Tibial artery (tissue), 4 donors: ENCODE measurements at regions of chr12 and their contacts with region 1.

Region 1: DNA sequence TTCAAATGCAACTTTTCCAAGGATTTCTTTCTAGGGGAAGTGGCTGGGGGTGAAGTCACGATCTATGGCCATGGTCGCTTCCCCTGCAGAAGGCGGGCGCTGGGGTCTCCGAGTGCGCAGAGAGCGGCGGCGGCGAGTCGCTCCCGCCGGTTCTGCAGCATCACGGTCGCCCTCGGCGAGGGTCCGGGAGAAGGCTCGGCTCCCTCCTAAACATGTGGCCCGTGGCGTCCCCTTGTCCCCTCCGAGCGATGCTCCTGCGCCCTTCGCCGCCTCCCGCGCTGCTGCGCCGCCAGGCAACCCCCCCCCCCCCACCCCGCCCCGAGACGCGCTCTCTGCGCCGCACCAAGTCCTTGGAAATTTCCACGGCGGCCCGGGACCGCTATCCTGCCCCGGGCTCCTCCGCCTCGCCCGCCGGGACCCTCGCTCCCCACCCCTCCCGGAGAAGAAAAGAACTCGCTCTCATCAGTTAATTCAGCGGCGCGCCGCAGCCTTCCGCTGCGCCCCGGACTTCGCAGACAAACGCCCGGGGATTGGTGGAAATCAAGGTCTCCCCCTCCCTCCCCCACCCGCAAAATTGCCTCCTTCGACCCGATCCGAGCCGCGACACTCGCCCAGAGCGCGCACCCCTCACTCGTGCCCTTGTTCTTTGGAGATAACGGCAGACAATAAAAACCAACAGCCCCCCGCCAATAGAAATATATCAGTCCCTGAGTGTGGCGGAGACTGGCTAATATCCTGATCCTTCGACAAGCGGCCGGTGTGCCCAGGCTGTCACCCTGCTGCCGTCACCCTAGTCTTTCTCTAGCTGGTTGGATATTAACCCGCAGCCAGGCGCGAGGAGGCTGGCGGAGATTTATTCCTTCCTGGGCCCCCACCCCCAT is at the start of gene ST8SIA1:
- DNase-seq: peak; percentile 28 to 71
- H3K4me3 ChIP-seq: peak within 1 kb of the TSS; percentile 60 to 65
- H3K27ac ChIP-seq: peak within 1 kb of the TSS; percentile 17 to 61
- H3K4me1 ChIP-seq: peaks cover 0 to 17% (median 5%) of the 10 kb centered on the region in 4 donors
- H3K27me3 ChIP-seq: no peaks in the 10 kb centered on the region
- CTCF ChIP-seq: no peak

Region 2: DNA sequence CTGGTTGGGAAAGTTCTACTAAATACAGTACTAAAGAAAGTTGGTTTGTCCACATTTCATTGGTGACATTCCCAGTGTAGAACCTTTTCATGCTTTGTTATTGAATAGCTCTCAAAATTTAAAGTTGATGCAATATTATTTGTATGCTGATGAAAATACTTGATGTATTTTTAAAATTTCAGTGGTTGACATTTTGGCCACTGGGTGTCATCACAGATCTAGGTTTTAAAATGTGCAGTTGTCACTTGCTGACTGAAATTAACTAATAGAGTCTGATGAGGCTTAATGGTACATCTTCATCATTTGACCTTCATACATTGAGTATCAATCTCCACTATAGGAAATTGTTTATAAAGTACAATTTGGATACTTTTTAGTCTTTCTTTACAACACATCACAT is 251.5 kb before region 1 on chr12:
- intact Hi-C with region 1: loop called (anchors 1 kb)
- DNase-seq: no peak
- H3K4me3 ChIP-seq: no peak overlapping the region
- H3K27ac ChIP-seq: no peak overlapping the region
- H3K4me1 ChIP-seq: no peaks in the 10 kb centered on the region
- H3K27me3 ChIP-seq: no peaks in the 10 kb centered on the region
- CTCF ChIP-seq: peak; percentile 47 to 61

Region 3: DNA sequence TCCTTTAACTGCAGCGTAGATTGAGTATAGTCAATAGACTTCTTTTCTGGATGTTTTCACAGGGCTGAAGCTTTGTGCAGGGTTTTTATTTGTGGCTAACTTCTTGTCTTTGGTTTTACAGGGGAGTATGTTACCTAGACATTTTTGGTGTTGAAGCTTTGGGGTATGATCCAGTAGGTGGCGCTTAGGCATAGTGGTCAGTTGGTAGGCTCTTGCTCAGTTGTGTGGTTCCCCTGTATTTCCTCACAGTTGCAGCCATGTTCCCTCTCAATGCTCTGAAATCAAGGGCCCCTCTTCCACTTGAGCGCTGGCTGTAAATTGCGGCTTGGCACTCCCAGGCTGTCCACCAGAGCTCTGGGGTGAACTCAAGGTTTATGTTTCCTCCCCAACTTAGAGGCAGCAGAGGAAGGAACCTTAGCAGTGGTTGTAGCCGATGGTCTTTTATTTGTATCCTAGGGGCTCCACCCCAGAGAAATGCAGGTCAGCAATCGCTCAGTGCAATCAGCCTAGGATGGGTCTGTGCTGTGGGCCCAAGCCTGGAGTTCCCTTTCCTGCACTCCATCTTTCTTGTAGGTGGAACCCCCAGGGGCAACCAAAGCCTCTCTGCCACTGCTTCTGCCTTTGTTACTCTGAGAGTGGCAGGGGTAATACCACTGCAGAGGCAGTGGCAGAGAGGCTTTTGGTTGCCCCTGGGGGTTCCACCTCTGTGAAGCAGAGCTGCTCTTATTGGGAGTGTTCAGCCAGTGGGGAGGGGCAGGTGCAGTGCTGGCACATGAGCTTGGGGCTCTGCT is 233.5 kb before region 1 on chr12:
- intact Hi-C with region 1: loop called (anchors 5 kb)
- DNase-seq: peak in 1 of 2 donors; percentile 60
- H3K4me3 ChIP-seq: no peak overlapping the region
- H3K27ac ChIP-seq: no peak overlapping the region
- H3K4me1 ChIP-seq: no peaks in the 10 kb centered on the region
- H3K27me3 ChIP-seq: peaks cover 0 to 6% of the 10 kb centered on the region in 2 donors
- CTCF ChIP-seq: peak; percentile 48 to 50

Region 4: GRCh38 chr12:22231836-22232235 is 102.8 kb before region 1 on chr12:
- intact Hi-C with region 1: loop called (anchors 10 kb)
- DNase-seq: no peak
- H3K4me3 ChIP-seq: no peak overlapping the region
- H3K27ac ChIP-seq: no peak overlapping the region
- H3K4me1 ChIP-seq: peaks cover 0 to 12% (median 2%) of the 10 kb centered on the region in 4 donors
- H3K27me3 ChIP-seq: no peaks in the 10 kb centered on the region
- CTCF ChIP-seq: no peak

Region 5: DNA sequence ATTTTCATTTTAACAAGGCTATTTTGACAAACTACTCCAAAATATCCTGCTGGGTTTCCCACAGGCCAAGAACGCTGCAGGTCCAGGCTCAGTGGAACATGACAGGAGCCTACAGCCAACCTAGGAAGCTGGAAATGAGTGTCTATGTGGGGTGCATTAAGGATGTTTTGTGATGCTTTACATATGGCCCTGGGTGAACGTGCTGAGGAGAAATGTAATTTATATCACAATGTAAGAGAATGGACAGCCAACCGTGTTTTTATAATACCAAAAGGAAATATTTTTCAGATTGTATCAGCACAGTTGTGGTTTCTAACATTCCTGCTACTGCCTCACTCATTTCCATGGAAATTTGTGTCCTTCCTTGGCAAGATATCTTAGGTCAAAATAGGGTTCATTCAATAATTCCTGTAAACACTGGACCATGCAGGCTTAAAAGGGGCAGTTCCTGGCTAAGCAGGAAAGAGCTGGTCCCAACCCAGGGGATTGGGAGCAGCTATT is 51.6 kb before region 1 on chr12:
- intact Hi-C with region 1: loop called (anchors 2 kb)
- DNase-seq: no peak
- H3K4me3 ChIP-seq: peak overlapping the region in 1 of 2 donors; percentile 35
- H3K27ac ChIP-seq: peak overlapping the region; percentile 66 to 86
- H3K4me1 ChIP-seq: peaks cover 0 to 24% (median 11%) of the 10 kb centered on the region in 4 donors
- H3K27me3 ChIP-seq: no peaks in the 10 kb centered on the region
- CTCF ChIP-seq: no peak